Activated T-helper 1 cell treated with anti-CD3 and anti-CD28 coated beads, Interleukin-12 subunit alpha, Interleukin-12 subunit beta, Interleukin-2, Interleukin-4 antibody, amounts not matched to agents 30 ng/mL and 10 ng/mL and 1 ng/mL, durations not matched to agents 14 hours and 24 hours and 36 hours (primary cell): ENCODE measurements at regions of chr3 and their contacts with region 1.

Region 1: DNA sequence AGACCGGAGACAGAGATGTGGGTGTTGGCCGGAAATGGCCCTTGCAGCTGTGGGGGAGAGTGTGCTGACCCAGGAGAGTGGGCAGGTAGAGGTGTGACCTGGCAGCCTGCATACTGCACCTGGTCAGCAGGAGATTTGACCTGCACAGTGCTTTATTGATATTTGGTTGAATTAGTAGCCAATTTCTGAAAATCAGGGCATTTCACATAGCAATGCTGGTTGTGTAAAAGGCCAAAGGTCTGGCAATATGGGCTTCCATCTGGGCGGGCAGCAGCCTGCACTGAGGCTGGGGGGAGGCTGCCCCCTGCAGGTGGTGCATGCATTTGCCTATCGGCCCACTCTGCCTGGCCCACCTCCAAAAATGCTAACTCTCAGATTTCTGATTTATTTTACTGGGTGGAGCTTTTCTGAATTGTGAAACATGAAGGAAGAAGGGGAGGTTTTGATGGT is 9.4 kb upstream of the MGLL start:
- DNase-seq: no peak
- H3K4me3 Mint-ChIP-seq: no peak overlapping the region
- H3K27ac Mint-ChIP-seq: no peak overlapping the region
- H3K4me1 Mint-ChIP-seq: no peaks in the 10 kb centered on the region
- H3K27me3 Mint-ChIP-seq: peaks cover 5% of the 10 kb centered on the region

Region 2: GRCh38 chr3:127697551-127698240 is 134.1 kb before region 1 on chr3:
- intact Hi-C with region 1: loop called (anchors 5 kb)
- DNase-seq: peak; percentile 38
- H3K4me3 Mint-ChIP-seq: no peak overlapping the region
- H3K27ac Mint-ChIP-seq: no peak overlapping the region
- H3K4me1 Mint-ChIP-seq: no peaks in the 10 kb centered on the region
- H3K27me3 Mint-ChIP-seq: peaks cover 4% of the 10 kb centered on the region